ENCODE measurements at regions of chr14 and their contacts with region 1.

Region 1: DNA sequence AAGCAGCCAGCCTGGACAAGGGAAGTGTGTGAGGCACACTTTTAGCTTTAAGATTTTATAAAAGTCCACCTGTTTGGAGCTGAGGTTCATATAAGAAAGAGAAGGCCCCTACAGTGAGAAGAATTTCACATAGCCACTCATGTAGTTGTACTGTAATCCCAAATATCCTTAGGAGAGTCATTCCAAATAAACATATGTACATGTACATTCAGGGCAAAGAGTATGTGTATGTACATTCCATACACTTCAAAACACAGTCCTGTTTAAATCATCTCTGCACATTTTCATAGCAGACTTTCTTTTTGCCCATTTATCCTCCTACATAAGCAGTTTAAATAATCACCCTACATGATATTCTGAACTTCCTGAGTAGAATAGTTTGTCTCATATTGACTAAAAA is 87.6 kb downstream of the GPR65 start:
- DNase-seq: no peak
- ATAC-seq: no peak
- H3K4me3 ChIP-seq: no peak overlapping the region
- H3K27ac ChIP-seq: no peak overlapping the region
- H3K4me1 ChIP-seq: no peaks in the 10 kb centered on the region
- H3K27me3 ChIP-seq: no peaks in the 10 kb centered on the region
- CTCF ChIP-seq: no peak

Region 2: DNA sequence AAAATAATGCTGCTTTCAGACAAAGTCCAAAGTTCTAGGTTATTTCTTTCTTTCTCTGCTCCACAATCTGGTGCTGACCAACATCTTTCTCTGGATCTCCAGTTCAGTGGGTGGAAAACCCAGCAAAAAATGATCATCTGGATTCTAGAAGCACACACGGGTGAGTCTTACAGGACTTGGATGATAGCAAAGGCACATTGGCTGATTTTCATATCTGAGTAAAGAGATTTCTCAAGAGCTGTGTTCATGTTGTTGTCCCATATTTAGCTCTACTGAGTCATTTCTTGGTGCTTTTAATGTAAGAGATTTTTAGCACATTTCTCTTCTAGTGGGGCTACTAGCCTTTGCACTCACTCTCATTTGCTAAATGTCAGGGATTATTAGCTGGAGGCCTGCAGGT is 436.2 kb before region 1 on chr14:
- CTCF ChIA-PET with region 1: no interaction called
- POLR2A ChIA-PET with region 1: no interaction called
- in situ Hi-C with region 1: no loop called
- intact Hi-C with region 1: no loop called
- DNase-seq: no peak
- ATAC-seq: no peak
- H3K4me3 ChIP-seq: no peak overlapping the region
- H3K27ac ChIP-seq: no peak overlapping the region
- H3K4me1 ChIP-seq: no peaks in the 10 kb centered on the region
- H3K27me3 ChIP-seq: no peaks in the 10 kb centered on the region
- CTCF ChIP-seq: no peak

Region 3: GRCh38 chr14:87916103-87916885 is 176.2 kb before region 1 on chr14:
- CTCF ChIA-PET with region 1: no interaction called
- POLR2A ChIA-PET with region 1: no interaction called
- in situ Hi-C with region 1: no loop called
- intact Hi-C with region 1: no loop called
- DNase-seq: no peak
- ATAC-seq: no peak
- H3K4me3 ChIP-seq: no peak overlapping the region
- H3K27ac ChIP-seq: no peak overlapping the region
- H3K4me1 ChIP-seq: no peaks in the 10 kb centered on the region
- H3K27me3 ChIP-seq: no peaks in the 10 kb centered on the region
- CTCF ChIP-seq: no peak

Region 4: GRCh38 chr14:88005978-88006851 is 86.3 kb before region 1 on chr14:
- CTCF ChIA-PET with region 1: no interaction called
- POLR2A ChIA-PET with region 1: no interaction called
- in situ Hi-C with region 1: no loop called
- intact Hi-C with region 1: no loop called
- DNase-seq: no peak
- ATAC-seq: no peak
- H3K4me3 ChIP-seq: no peak overlapping the region
- H3K27ac ChIP-seq: no peak overlapping the region
- H3K4me1 ChIP-seq: no peaks in the 10 kb centered on the region
- H3K27me3 ChIP-seq: no peaks in the 10 kb centered on the region
- CTCF ChIP-seq: no peak

Region 5: DNA sequence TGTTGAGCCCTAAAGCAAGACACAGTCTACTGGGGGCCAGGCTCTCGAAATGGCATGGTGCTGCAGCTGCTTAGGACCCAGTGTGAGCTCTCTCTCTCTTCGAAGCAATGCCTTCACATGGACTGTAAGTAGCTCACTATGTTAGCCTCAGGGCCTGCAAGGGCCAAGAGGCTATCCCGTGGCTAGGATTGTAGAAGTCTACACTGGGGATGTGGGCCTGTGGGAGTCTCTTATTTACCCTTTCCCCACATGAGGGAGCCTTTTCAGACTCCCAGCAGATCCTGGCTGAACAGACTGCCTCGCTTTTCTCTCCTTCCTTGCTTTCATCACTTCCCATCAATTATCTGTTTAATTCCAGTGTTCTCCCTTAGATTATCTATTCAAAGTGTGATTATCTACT is 13.8 kb after region 1 on chr14:
- CTCF ChIA-PET with region 1: no interaction called
- POLR2A ChIA-PET with region 1: no interaction called
- in situ Hi-C with region 1: no loop called
- intact Hi-C with region 1: loop called (anchors 1 kb)
- DNase-seq: no peak
- ATAC-seq: no peak
- H3K4me3 ChIP-seq: no peak overlapping the region
- H3K27ac ChIP-seq: no peak overlapping the region
- H3K4me1 ChIP-seq: no peaks in the 10 kb centered on the region
- H3K27me3 ChIP-seq: no peaks in the 10 kb centered on the region
- CTCF ChIP-seq: no peak

Measured in Panc1 (cell line).